ENCODE measurements at regions of chr15 and their contacts with region 1.

Region 1: GRCh38 chr15:84653910-84654704 is at the start of gene WDR73:
- DNase-seq: peak; percentile 98
- H3K4me3 Mint-ChIP-seq: peak within 1 kb of the TSS; percentile 96
- H3K27ac Mint-ChIP-seq: peak within 1 kb of the TSS; percentile 89
- H3K4me1 Mint-ChIP-seq: peaks cover 48% of the 10 kb centered on the region
- H3K27me3 Mint-ChIP-seq: no peaks in the 10 kb centered on the region
- total RNA-seq, gene WDR73: 22.1 to 23.8 TPM

Region 2: GRCh38 chr15:84666373-84666772 is 12.3 kb after region 1 on chr15:
- CTCF ChIA-PET with region 1: interaction called, 13 read pairs
- POLR2A ChIA-PET with region 1: interaction called, 7 read pairs
- DNase-seq: no peak
- H3K4me3 Mint-ChIP-seq: no peak overlapping the region
- H3K27ac Mint-ChIP-seq: no peak overlapping the region
- H3K4me1 Mint-ChIP-seq: peaks cover 5% of the 10 kb centered on the region
- H3K27me3 Mint-ChIP-seq: no peaks in the 10 kb centered on the region